HEK293 (cell line): ENCODE measurements at regions of chr22 and their contacts with region 1.

Region 1: DNA sequence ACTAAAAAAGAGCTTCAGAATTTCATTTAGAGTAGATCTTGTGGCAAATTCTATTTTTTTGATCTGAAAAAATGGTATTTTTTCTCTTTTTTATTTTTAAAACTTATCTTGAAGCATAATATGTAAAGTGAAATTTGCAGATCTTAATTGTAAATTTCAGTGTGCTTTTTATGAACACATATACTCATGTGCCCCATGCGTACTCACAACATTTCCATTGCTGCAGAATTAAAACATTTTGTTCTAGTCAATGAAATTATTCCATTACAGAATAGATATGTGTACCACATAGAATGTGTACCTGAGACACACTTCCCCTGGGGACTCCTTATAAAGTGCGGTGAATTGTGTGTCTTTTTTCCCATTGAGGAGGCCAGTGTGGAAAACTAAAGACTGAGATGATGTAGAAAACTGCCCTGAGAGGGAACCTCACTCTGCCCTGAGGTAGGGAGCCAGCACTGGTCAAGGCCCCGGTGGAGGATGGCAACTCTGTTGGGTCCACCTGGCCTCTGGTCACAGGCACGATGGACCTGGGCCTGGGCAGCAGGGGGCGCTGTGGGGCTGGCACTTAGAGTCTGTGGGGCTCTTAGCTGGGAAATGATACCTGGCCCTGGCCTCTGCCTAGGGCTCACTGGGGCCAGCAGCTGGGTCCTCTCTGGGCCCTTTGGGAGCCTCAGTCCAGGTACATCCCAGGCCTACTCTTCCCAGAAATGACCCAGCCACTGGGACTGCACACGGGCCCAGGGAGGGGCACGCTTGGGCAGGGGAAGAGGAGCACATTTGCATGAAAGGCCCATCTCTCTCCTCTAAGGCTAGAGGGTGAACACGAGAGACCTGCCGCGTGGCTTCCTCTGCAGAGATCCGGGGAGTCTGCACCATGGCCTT is 77.9 kb upstream of the TOP3B start:
- H3K4me3 ChIP-seq: no peak overlapping the region
- H3K27ac ChIP-seq: no peak overlapping the region
- H3K4me1 ChIP-seq: no peaks in the 10 kb centered on the region
- CTCF ChIP-seq: peak; percentile 52

Region 2: GRCh38 chr22:22030493-22031182 is 29.8 kb before region 1 on chr22:
- CTCF ChIA-PET with region 1: interaction called, 35 read pairs
- POLR2A ChIA-PET with region 1: no interaction called
- H3K4me3 ChIP-seq: no peak overlapping the region
- H3K27ac ChIP-seq: no peak overlapping the region
- H3K4me1 ChIP-seq: no peaks in the 10 kb centered on the region
- CTCF ChIP-seq: peak; percentile 59; the same call in 1 of the 2 replicates

Region 3: GRCh38 chr22:22037740-22038139 is 22.7 kb before region 1 on chr22:
- CTCF ChIA-PET with region 1: interaction called, 35 read pairs
- POLR2A ChIA-PET with region 1: no interaction called
- H3K4me3 ChIP-seq: no peak overlapping the region
- H3K27ac ChIP-seq: no peak overlapping the region
- H3K4me1 ChIP-seq: no peaks in the 10 kb centered on the region
- CTCF ChIP-seq: no peak

Region 4: DNA sequence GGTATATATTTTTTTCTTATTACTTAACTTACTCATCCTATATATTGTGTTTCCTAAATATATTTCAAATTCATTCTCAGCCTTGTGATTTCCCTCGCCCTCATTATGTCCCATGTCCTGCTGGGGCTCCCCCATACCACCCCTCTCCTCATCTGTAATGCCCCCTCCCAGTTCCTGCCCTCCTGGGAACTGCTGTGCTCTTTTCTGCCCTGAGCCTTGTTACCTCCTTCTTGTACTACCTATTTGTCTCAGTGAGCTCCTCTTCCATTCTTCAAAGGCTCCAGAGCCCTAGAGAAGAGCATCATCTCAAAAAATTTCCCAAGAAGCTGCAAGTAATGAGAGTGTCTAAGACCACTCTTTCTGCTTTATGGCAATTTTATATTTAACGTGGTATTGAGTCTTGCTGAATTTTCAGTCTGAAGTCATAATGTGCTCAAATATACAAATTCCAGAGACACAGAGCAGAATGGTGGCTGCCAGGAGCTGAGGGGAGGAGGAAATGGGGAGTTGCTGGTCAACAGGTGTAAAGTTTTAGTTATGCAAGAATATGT is 11.4 kb before region 1 on chr22:
- CTCF ChIA-PET with region 1: interaction called, 11 read pairs
- POLR2A ChIA-PET with region 1: no interaction called
- H3K4me3 ChIP-seq: no peak overlapping the region
- H3K27ac ChIP-seq: no peak overlapping the region
- H3K4me1 ChIP-seq: no peaks in the 10 kb centered on the region
- CTCF ChIP-seq: no peak

Region 5: DNA sequence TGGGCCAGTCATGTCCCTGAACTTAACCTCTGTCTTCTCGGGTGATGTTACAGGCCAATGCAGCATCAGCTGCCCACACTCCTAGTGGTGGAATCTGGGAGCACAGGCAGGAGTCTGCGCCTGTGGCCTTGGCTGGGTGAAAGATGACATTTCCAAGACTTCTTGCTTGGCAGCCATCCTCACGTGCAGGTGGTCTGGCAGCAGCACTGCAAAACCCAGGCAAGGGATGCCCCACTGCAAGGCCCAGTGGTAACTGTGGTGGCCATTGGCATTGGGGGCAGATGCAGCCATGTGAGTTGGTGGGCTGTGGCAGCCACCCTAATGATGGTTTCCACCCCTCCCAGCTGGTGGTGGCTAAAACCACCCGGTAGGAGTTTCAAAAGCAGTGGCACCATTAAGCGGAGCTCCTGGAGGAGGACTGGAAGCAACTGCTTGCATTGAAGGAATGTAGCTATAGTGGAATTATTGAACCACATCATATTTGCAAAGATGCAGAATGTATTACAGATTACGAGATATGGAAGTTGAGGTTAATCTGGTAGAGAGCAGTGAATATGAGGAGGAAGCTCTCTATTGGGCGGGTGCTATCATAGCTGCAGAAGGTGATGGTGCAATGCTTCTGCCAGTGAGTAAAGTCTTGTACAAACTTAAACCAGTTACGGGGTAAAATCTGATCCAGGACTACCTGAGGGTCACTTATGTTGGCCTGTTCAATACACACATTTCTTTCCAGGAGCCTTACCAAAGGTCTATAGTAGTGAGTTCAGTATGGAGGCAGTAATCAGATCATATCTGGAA is 42.8 kb after region 1 on chr22:
- CTCF ChIA-PET with region 1: interaction called, 11 read pairs
- POLR2A ChIA-PET with region 1: no interaction called
- H3K4me3 ChIP-seq: no peak overlapping the region
- H3K27ac ChIP-seq: no peak overlapping the region
- H3K4me1 ChIP-seq: no peaks in the 10 kb centered on the region
- CTCF ChIP-seq: 0 out of 2 replicates have a peak, but pooled peaks have one; percentile 8

Region 6: DNA sequence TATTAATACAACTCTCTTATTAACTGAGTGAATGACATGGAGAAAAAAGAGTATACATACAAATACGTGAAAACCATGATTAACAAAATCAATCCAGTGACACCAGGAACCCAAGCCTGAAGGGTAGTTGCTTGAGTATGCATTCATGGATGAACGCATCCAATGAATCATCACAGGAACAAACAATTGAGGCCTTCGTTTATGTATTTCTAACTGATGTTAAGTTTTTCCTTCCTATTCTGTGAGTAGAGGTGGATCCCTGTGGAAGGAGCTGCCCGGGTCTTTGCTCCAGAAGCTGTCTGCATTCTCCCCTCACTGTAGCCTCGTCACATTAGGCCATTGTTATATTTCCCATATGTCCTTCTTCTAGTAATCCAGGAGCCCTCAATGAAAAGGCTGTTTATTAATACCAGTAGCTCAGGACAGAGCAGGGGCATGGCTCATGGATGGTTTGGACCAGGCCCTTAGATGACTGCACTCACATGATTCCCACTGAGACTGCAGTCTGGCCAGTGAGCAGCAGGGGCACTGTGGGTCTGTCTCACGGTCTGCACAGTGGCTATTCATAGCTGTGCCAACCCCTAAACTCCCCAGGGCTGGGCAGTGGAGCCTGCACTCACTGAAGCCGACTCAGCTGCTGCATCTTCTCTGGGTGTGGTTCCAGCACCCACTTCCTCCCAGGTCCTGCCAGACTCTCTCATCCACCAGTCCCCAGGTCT is 50.3 kb after region 1 on chr22:
- CTCF ChIA-PET with region 1: interaction called, 20 read pairs
- POLR2A ChIA-PET with region 1: no interaction called
- H3K4me3 ChIP-seq: no peak overlapping the region
- H3K27ac ChIP-seq: no peak overlapping the region
- H3K4me1 ChIP-seq: no peaks in the 10 kb centered on the region
- CTCF ChIP-seq: peak; percentile 40; the same call in 1 of the 2 replicates

Region 7: GRCh38 chr22:22123118-22123959 is 62.9 kb after region 1 on chr22:
- CTCF ChIA-PET with region 1: interaction called, 11 read pairs
- POLR2A ChIA-PET with region 1: no interaction called
- H3K4me3 ChIP-seq: no peak overlapping the region
- H3K27ac ChIP-seq: no peak overlapping the region
- H3K4me1 ChIP-seq: no peaks in the 10 kb centered on the region
- CTCF ChIP-seq: no peak